Calu3 (cell line): ENCODE measurements at regions of chr3 and their contacts with region 1.

Region 1: DNA sequence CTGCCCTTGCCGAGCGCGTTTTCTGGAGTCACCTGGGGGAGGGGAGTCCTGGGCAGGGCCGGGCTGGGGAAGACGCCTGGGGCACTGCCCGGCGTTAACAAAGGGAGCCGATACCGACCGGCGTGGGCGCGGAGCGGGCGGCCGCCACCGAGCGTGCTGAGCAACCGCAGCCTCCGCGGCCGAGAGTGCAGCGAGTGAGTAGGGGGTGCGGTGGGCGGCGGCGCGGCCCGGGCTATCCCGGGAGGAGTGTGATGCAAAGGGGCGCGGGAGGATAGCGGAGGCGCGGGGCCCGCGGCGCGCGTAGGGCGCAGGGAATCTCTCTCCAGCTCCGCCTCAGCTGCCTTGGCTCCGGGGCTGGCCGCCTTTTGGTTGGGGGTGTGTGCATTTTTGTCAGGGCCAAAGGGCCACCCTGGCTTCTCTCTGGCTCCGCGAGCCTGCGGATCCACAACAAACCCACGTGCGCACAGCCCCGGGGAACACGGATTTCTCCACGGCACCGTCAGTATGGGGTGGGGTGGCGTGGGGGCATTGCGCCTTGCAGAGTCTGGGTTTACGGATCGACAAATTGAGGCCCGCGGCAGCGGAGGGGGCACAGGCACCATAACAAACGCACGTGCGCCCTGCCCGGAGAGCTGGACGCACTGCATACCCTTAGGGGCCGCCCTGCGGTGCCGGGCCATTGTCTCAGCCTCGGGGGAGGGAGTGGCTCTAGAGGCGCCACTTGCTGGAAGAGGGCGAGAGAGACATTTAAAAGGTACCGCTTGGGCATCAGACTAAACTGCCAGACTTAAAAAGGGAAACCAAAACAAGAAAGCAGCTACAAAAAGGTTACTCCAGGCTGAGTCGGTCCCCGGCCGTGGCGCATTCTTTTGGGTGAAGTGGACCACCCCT is 560 bp downstream of the ST6GAL1 start:
- DNase-seq: peak; percentile 79
- H3K4me3 Mint-ChIP-seq: peak overlapping the region; percentile 80
- H3K27ac Mint-ChIP-seq: peak overlapping the region; percentile 4
- H3K4me1 Mint-ChIP-seq: peaks cover 24% of the 10 kb centered on the region
- H3K27me3 Mint-ChIP-seq: peaks cover 55% of the 10 kb centered on the region
- CTCF ChIP-seq: no peak

Region 2: DNA sequence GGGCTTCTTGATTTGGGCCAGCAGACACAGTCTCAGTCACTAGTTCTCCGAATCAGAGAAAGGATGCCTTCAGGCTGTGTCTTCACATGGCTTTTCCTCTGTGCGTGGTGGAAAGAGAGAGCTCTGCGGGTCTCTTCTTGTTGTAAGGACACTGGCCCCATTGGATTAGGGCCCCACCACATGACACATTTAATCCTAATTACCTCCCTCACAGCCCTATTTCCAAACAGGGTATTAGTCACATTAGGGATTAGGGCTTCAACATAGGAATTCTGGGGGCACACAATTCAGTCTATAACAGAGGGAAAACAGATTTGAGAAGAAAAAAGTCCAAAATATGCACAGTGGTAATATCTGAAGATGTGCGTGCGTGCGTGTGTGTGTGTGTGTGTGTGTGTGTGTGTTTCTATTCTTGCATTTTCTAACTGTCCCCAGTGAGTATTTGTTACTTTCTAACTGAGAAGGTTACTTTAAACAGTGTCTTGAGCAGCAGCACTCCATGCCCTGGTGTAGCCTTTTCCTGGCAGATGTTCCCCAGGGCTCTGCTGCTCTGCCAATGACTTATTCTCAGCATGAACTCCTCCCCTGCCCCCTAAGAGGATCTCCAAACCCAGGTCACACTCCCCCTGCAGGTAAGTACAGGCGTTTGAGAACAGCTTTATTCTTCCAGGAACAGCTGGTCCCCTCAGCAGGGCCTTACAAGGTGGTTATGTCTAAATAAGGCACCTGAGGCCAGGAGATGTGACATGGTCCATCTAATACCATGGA is 135.5 kb after region 1 on chr3:
- CTCF ChIA-PET with region 1: interaction called, 4 read pairs
- intact Hi-C with region 1: loop called (anchors 10 kb)
- DNase-seq: peak; percentile 51
- H3K4me3 Mint-ChIP-seq: no peak overlapping the region
- H3K27ac Mint-ChIP-seq: no peak overlapping the region
- H3K4me1 Mint-ChIP-seq: peaks cover 27% of the 10 kb centered on the region
- H3K27me3 Mint-ChIP-seq: no peaks in the 10 kb centered on the region
- CTCF ChIP-seq: no peak